ENCODE measurements at regions of chr6 and their contacts with region 1.

Region 1: GRCh38 chr6:154156135-154156896 is 117.3 kb downstream of the OPRM1 start:
- DNase-seq: peak; percentile 86
- H3K4me3 Mint-ChIP-seq: peak overlapping the region; percentile 60
- H3K27ac Mint-ChIP-seq: peak overlapping the region; percentile 77
- H3K4me1 Mint-ChIP-seq: peaks cover 53% of the 10 kb centered on the region
- H3K27me3 Mint-ChIP-seq: no peaks in the 10 kb centered on the region

Region 2: DNA sequence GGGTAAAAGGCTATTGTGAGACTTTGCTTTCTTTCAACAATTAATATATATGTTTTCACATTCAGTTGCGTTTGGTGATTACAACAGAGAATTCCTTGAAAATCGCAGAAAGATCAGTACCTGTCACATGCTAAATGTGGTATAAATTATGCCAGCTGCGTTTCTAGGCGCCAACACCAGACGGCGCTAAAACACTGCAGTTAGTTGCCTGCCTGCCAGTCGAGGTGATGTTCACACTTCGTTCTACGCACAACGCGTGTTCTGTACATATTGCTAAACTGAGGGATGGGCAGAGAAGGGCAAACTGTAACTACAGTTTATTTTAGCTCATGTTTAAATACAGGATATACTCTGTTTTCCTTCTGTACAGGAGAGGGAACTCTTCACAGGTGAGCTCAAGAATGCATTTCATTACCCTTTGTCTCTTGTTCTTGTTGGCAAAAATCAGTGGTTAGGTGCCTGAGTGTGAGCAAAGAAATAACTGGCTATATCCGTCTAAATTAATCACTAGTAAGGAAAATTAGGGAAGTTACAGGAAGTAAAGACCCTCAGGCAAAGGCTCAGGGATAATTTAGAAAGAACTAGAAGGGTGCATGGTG is 925.2 kb before region 1 on chr6:
- CTCF ChIA-PET with region 1: no interaction called
- intact Hi-C with region 1: loop called (anchors 5 kb)
- DNase-seq: peak; percentile 72
- H3K4me3 Mint-ChIP-seq: no peak overlapping the region
- H3K27ac Mint-ChIP-seq: no peak overlapping the region
- H3K4me1 Mint-ChIP-seq: no peaks in the 10 kb centered on the region
- H3K27me3 Mint-ChIP-seq: peaks cover 4% of the 10 kb centered on the region

Region 3: GRCh38 chr6:154202958-154203357 is 46.6 kb after region 1 on chr6:
- CTCF ChIA-PET with region 1: no interaction called
- intact Hi-C with region 1: no loop called
- DNase-seq: no peak
- H3K4me3 Mint-ChIP-seq: no peak overlapping the region
- H3K27ac Mint-ChIP-seq: no peak overlapping the region
- H3K4me1 Mint-ChIP-seq: peaks cover 58% of the 10 kb centered on the region
- H3K27me3 Mint-ChIP-seq: no peaks in the 10 kb centered on the region

Region 4: DNA sequence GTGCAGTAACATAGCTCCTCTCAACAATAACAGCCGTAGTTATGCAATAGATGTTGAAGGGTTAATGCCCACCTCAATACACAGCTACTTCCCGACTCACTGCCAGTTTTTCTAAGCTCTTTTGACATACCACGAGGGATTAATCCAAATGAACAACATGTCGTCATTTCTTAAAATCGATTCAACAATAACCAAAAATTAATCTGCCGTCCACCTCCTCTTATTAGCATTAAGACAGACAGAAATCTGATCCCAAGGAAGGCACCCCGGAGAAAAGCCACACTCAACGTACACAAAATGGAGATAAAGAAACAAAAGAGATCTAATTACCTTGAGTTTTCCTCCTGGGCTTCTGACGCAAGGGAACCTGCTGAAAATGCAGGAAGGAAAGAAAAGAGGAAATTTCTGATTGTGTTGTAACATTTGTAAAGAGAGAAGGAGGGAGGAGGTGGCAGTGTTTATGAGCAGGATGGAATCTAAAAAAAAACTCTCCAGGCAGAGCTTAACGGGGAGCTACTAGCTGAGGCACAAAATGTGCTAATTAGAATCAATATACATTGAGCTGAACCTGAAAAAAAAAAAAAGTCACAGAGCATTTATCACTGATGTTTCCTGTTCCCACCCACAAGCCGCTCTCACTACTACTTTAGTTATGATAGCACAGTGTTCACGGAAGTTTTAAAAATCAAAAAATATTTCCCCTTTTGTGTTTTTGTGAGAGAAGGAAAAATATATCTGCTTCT is 91.0 kb after region 1 on chr6:
- CTCF ChIA-PET with region 1: interaction called, 8 read pairs
- intact Hi-C with region 1: loop called (anchors 1 kb)
- DNase-seq: peak; percentile 69
- H3K4me3 Mint-ChIP-seq: peak overlapping the region; percentile 87
- H3K27ac Mint-ChIP-seq: peak overlapping the region; percentile 98
- H3K4me1 Mint-ChIP-seq: peaks cover 68% of the 10 kb centered on the region
- H3K27me3 Mint-ChIP-seq: no peaks in the 10 kb centered on the region

Region 5: GRCh38 chr6:154329350-154330170 is 173.2 kb after region 1 on chr6:
- CTCF ChIA-PET with region 1: interaction called, 10 read pairs
- intact Hi-C with region 1: no loop called
- DNase-seq: no peak
- H3K4me3 Mint-ChIP-seq: no peak overlapping the region
- H3K27ac Mint-ChIP-seq: no peak overlapping the region
- H3K4me1 Mint-ChIP-seq: peaks cover 5% of the 10 kb centered on the region
- H3K27me3 Mint-ChIP-seq: no peaks in the 10 kb centered on the region

Region 6: DNA sequence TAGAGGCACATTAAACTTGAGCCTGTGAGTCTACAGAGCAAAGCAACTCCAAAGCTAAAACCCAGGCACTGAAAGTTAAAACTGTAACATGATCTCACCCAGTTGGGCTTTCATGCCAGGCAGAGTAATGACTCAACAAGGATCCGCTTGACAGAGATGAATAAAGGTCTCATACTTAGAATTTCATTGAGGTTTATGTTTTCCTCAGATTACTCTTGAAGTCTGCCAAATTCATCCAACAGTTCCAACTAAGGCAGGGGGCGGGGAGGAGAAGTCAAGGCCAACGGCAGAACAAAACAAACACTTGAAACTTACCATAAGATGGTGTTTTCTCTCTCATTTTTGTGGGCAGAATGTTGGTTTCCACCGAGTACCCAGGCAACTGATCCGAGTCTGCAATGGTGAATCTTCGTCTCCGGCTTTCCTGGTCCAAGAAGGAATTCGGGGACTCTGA is 254.3 kb after region 1 on chr6:
- CTCF ChIA-PET with region 1: interaction called, 4 read pairs
- intact Hi-C with region 1: loop called (anchors 1 kb)
- DNase-seq: peak; percentile 64
- H3K4me3 Mint-ChIP-seq: no peak overlapping the region
- H3K27ac Mint-ChIP-seq: no peak overlapping the region
- H3K4me1 Mint-ChIP-seq: peaks cover 6% of the 10 kb centered on the region
- H3K27me3 Mint-ChIP-seq: peaks cover 2% of the 10 kb centered on the region

Region 7: DNA sequence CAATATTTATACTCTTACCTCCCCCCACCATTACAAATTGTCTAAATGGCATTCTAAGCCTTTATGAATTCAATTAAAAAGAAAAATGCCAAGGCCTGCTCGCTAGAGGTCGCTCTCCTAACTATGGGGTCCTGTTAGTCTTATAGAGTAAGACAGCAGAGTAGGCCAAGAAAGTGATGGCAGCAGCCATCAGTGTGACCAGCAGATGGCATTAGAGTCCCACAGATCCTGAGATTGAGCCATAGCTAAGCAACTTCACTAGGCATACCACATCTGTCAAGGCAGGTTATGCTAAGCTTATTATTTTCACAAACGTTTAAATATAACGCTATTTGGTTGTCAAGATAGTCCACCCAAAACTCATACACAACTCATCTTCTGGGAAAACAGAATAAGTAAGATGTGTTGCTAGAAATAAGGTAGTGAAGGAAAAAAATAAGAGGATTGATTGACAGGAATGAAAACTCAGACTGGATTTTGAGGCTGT is 519.3 kb after region 1 on chr6:
- CTCF ChIA-PET with region 1: interaction called, 3 read pairs
- intact Hi-C with region 1: loop called (anchors 1 kb)
- DNase-seq: peak; percentile 96
- H3K4me3 Mint-ChIP-seq: no peak overlapping the region
- H3K27ac Mint-ChIP-seq: no peak overlapping the region
- H3K4me1 Mint-ChIP-seq: no peaks in the 10 kb centered on the region
- H3K27me3 Mint-ChIP-seq: no peaks in the 10 kb centered on the region

Measured in activated naive CD4-positive, alpha-beta T cell treated with anti-CD3 and anti-CD28 coated beads for 36 hours (primary cell).